ENCODE measurements at regions of chr3 and their contacts with region 1.

Region 1: DNA sequence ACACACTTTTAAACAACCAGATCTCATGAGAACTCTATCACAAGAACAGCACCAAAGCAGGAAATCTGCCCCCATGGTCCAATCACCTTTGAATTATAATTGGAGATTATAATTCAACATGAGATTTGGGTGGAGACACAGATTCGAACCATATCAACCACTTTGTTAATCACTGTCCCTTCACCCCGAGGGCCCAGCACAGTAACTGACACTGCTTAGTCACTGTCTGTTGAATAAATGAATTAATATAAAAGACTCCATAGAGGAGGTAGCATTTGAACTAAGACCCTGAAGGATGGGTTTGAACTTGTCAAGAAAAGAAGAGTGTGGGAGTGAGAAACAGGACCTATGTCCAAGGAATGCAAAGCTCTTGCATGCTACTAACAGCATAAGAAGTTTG is 276.4 kb downstream of the SHOX2 start:
- DNase-seq: no peak
- H3K4me3 ChIP-seq: no peak overlapping the region
- H3K27ac ChIP-seq: no peak overlapping the region
- H3K4me1 ChIP-seq: no peaks in the 10 kb centered on the region
- H3K27me3 ChIP-seq: no peaks in the 10 kb centered on the region
- CTCF ChIP-seq: no peak
- EP300 ChIP-seq: no peak
- POLR2A ChIP-seq: no peak

Region 2: GRCh38 chr3:156483961-156484787 is 1345.6 kb before region 1 on chr3:
- intact Hi-C with region 1: loop called in 1 of 4 experiments (anchors 5 kb)
- DNase-seq: peak in 1 of 5 donors; percentile 22
- H3K4me3 ChIP-seq: no peak overlapping the region
- H3K27ac ChIP-seq: no peak overlapping the region
- H3K4me1 ChIP-seq: peaks cover 4% of the 10 kb centered on the region
- H3K27me3 ChIP-seq: no peaks in the 10 kb centered on the region
- CTCF ChIP-seq: no peak
- EP300 ChIP-seq: no peak
- POLR2A ChIP-seq: no peak

Region 3: DNA sequence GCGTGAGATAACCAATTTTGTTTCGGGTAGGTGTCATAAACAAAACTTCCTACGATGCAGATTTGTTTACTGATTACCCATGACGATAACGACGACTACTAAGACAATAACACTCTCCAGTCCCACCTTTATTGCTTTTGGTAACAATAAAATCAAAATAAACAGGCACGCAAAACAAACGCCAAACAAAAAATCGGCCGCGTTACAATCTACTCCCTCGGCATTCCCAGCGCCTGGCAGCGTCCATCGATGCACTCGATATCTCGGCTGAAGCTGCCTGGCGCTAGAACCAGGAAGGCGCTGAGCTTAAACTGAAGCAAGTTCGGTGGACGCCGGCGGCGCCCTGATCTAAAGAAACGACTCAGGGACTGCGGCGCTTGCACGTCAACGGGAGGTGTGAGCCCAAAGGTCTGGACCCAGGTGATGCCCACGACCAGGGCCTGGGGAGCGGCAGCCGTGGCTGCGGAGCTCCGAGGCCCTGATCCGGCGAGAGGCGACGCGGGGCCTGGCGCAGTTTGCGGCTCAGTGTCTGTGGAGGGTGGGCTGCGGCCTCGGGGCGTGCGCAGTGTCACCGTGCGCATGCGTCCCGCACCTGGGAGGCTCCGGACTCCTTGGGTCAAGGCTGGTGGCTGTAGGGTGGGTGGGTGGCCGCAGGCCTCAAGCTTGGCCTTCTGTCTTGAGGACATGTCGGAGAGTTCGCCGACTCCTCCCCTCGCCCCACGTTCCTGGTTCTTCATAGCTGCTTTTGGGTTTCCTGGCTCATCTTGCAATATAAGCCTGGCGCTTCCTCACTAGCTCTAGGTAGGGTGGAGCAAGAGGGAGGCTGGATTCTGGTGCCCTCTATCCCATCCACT is 280.2 kb after region 1 on chr3 and contains the start of gene RSRC1:
- intact Hi-C with region 1: no loop called
- DNase-seq: peak; percentile 73 to 85 (median 79)
- H3K4me3 ChIP-seq: peak within 1 kb of the TSS; percentile 92
- H3K27ac ChIP-seq: peak within 1 kb of the TSS in 1 of 2 donors; percentile 24
- H3K4me1 ChIP-seq: peaks cover 6% of the 10 kb centered on the region
- H3K27me3 ChIP-seq: no peaks in the 10 kb centered on the region
- CTCF ChIP-seq: peak in 1 of 3 donors; percentile 5
- EP300 ChIP-seq: no peak
- POLR2A ChIP-seq: no peak
- total RNA-seq, gene RSRC1: 30.2 to 45.1 (median 34.8) TPM